Right ventricle myocardium superior (tissue), 1 donor: ENCODE measurements at regions of chr15 and their contacts with region 1.

Region 1: DNA sequence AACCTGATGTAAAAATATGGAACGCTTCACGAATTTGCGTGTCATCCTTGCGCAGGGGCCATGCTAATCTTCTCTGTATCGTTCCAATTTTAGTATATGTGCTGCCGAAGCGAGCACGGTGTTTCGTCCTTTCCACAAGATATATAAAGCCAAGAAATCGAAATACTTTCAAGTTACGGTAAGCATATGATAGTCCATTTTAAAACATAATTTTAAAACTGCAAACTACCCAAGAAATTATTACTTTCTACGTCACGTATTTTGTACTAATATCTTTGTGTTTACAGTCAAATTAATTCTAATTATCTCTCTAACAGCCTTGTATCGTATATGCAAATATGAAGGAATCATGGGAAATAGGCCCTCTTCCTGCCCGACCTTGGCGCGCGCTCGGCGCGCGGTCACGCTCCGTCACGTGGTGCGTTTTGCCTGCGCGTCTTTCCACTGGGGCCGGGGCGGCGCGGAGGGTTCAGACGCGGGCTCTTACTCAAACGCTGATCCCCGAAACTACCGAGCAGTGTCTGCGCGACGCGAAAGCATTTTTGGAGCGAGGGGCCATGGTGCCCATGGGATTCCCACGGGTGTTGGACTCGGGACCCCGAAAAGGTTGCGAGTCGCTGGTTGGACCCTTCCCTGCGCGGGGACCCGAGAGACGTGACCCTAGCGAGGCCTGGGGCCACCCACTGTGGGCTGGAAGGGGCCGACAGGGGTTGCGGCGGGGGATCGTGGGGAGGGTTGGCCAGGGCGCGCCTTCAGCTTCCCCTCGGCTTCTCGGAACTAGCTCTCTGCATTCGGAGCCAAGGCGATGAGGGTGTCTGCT is at the start of gene RNU6-1:
- DNase-seq: peak; percentile 97
- ATAC-seq: peak; percentile 96
- total RNA-seq, gene RNU6-1: not detected

Region 2: GRCh38 chr15:66946578-66947164 is 893.5 kb before region 1 on chr15:
- intact Hi-C with region 1: loop called (anchors 10 kb)
- DNase-seq: peak; percentile 78
- ATAC-seq: peak; percentile 86

Region 3: DNA sequence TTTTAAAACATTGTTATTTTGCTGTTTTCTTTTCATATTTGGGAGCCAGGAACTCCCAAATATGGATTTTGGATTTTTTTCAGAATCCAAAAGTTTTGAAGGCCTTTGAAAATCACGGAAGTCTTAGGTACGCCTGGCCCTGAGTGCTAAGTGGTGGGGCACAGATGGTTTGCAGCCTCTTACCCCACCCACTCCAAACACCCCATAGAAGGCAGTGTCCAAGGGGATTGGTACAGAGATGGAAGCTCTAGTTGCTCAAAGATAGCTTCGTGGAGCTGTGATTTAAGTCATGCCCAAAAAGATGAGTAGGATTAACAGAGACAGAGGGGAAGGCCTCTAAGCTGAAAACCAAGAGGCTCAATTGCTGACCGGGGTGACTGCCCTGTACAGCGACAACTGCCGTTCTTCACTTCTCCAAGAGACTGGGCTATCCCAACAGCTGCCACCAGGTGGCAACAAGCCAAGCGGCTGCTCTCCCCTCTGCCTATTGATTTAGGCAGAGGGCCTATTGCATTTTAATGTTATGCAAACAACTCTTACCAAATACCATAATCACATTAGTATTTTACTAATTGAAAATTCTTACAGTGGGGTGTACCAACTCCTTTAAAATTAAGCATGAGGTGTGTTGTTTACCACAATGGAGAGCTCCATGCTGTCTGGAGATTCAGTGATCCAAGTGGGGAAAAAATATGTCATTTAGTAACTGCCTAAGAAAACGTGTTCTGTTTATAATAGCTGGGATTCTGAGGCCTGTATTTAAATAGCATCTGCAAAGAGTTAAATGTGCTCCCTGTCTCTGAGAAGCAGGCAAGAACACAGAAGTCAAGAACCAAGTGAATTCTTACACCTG is 383.2 kb before region 1 on chr15:
- intact Hi-C with region 1: loop called (anchors 2 kb)
- DNase-seq: peak; percentile 90
- ATAC-seq: peak; percentile 85

Region 4: DNA sequence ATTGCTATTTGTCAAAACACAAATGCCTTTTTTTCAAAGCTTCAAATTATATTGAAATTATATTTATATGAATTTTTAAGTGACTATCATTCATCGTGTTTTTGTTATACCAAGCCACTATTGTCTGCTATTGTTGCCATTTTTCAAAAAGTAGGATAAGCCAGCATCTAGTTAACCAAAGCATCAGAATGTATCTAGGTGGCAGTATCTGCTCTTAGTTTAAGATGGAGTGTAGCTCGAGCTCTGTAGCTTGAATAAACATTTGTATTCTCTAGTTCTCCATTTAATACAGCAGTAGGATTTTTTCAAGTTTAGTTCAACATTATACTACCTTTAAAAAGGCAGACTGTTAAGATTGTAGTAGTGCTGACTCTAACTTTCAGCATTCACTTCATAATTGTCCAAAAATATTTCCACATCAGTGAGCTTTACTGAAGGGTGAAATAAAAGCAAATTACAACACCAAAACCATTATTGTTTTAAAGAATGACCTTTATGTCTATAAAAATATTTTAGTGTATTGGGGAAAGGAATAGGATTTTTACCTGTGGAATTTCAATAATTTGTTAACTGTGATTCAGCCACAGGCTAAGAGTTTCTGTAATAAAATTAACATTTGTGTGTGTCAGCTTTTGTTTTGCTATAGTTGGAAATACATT is 338.8 kb before region 1 on chr15:
- intact Hi-C with region 1: loop called (anchors 5 kb)
- DNase-seq: no peak
- ATAC-seq: peak; percentile 67